Common myeloid progenitor, CD34-positive (primary cell): ENCODE measurements at regions of chr3 and their contacts with region 1.

Region 1: GRCh38 chr3:34683851-34684250 is 885.4 kb downstream of the PDCD6IP start:
- DNase-seq: peak; percentile 42 to 70 (median 66)
- H3K4me3 ChIP-seq: no peak overlapping the region
- H3K27ac ChIP-seq: no peak overlapping the region
- H3K4me1 ChIP-seq: no peaks in the 10 kb centered on the region
- H3K27me3 ChIP-seq: no peaks in the 10 kb centered on the region

Region 2: GRCh38 chr3:33883538-33883950 is 800.3 kb before region 1 on chr3:
- CTCF ChIA-PET with region 1: interaction called, 52 read pairs
- POLR2A ChIA-PET with region 1: no interaction called
- DNase-seq: peak; percentile 42 to 66 (median 51)
- H3K4me3 ChIP-seq: peak overlapping the region in 1 of 7 experiments; percentile 29
- H3K27ac ChIP-seq: no peak overlapping the region
- H3K4me1 ChIP-seq: peaks cover 0 to 6% (median 3%) of the 10 kb centered on the region in 4 experiments
- H3K27me3 ChIP-seq: no peaks in the 10 kb centered on the region

Region 3: DNA sequence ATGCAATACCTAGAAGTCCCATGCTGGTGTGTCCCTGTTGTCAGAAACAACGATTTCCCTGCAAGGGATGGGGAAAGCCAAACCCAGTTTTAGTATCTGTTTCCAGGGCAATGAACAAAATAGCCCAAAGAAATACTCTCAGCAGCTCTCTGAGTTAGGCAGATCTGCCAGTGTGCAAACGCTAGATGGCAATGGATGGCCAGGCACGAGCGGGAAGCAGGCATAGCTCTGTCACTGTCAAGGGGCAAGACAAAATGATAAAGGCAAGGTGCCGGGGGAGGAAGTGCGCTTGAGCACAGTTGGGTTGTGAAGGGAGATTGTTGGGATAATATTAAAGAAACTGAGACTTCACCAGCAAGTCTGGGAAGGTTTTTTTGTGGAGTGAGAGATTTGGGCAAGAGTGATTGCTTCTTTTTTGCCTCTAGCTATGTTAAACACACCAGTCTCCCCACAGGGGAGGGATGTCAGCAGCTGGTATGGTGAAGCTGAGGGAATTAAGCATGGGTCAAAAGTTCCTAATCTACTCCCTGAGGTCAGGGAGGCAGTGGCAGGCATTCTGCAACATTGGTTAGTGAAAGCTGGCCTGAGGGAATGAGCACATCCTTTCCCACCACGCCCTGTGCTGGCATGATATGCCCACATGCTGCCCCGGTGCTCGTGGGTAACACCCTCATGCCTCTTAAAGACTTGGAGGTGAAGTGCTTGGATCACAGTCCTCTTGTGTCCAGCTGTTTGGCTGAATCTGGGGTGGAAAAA is 767.9 kb before region 1 on chr3:
- CTCF ChIA-PET with region 1: interaction called, 31 read pairs
- POLR2A ChIA-PET with region 1: no interaction called
- DNase-seq: peak; percentile 38 to 69 (median 52)
- H3K4me3 ChIP-seq: no peak overlapping the region
- H3K27ac ChIP-seq: no peak overlapping the region
- H3K4me1 ChIP-seq: peaks cover 11 to 49% (median 36%) of the 10 kb centered on the region in 4 experiments
- H3K27me3 ChIP-seq: no peaks in the 10 kb centered on the region